Right ventricle myocardium superior (tissue), 1 donor: ENCODE measurements at regions of chr4 and their contacts with region 1.

Region 1: GRCh38 chr4:100555611-100556337 is 38.0 kb upstream of the EMCN start:
- DNase-seq: no peak
- ATAC-seq: no peak

Region 2: DNA sequence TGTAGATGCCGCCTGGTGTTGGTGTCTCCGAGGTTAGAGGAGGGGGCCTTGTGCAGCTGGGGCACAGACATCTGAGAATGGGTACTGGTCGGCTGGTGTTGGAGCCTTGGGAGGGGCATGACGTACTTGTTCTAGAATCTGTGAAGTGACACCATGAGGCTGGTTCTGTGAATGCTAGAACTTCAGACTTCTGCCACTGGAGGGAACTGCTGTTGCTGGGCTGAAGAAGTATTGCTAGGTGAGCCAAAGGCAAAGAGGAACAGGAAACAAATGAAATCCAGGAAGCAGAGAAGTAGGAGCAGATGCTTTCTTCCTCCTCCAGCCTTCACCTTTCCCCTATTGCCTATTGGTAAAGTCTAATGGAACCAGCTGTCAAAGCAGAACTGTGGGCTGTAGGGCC is 244.6 kb before region 1 on chr4:
- intact Hi-C with region 1: no loop called
- DNase-seq: no peak
- ATAC-seq: no peak

Region 3: GRCh38 chr4:100417565-100417964 is 138.2 kb before region 1 on chr4:
- intact Hi-C with region 1: no loop called
- DNase-seq: no peak
- ATAC-seq: no peak

Region 4: GRCh38 chr4:100631281-100631968 is 75.7 kb after region 1 on chr4:
- intact Hi-C with region 1: no loop called
- DNase-seq: no peak
- ATAC-seq: no peak

Region 5: GRCh38 chr4:101367201-101367600 is 811.4 kb after region 1 on chr4:
- intact Hi-C with region 1: loop called (anchors 10 kb)
- DNase-seq: no peak
- ATAC-seq: no peak